Sciatic nerve (tissue), 2 donors: ENCODE measurements at regions of chr15 and their contacts with region 1.

Region 1: DNA sequence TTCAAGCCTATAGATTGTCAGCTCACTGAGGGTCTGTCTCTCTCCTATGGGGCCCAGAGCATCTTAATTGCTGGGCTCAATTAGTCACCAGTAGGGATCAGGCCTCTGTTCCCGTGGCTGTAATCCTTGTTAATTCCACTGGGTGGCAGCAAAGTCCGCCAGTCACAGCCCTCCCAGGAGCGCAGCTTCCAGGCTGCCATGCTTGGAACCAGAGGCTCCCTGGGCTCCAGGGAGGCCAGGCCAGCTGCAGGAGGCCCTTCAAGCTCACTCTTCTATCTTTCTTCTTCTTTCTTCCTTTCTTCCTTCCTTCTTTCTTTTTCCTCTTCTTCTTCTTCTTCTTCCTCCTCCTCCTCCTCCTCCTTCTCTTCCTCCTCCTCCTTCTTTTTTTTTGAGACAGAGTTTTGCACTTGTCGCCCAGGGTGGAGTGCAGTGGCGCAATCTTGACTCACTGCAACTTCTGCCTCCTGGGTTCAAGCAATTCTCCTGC is 14.4 kb downstream of the RNU5B-1 start:
- DNase-seq: peak; percentile 84
- ATAC-seq: peak; percentile 96

Region 2: DNA sequence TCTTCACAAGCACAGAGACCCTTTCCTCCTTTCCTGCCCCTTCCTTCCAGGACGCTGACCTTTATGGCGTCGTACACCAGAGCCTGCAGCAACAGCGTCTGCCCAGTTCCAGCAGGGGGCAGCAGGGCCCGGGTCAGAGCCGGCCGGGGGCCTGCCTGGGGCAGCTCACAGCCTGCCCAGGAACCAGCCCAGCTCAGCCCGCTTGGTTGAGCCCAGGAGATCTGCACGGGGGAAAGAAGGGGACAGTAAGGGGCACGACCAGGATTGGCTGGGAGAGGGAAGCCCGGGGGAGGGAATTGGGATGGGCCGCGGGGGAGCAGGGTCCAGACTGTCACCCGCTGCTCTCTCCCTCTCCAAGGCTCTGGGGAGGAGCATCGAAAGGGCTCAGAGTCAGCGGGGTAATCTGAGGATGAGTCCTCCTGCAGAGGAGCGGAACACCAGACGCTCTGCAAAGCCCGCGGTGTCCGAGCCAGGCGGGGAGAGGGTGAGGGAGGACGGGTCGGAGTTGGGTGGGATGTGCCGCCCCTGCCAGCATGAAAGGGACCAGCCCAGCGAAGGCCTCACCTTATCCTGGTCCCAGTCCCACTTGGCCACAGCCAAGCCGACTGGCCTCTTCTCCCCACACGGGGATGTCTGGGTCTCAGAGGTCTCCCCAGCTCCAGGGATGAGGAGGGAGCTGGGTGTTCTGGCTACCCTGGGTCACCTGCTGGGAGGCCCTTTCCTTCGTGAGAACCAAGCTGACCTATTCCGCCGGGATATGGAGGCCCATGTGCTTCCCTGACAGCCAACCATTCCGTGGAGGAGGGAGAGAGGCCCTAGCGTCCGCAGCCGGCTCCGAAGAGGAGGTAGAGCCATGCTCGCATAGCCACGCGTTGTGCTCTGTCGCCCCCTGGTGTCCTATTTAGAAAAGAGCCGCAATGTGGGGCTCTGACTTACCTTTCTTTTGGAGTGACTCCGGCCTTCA is 66.3 kb after region 1 on chr15:
- intact Hi-C with region 1: loop called (anchors 2 kb)
- DNase-seq: peak; percentile 92
- ATAC-seq: peak; percentile 96